ENCODE measurements at regions of chr14 and their contacts with region 1.

Region 1: GRCh38 chr14:103899316-103899715 is 28.9 kb upstream of the TDRD9 start:
- DNase-seq: no peak
- H3K4me3 ChIP-seq: no peak overlapping the region
- CTCF ChIP-seq: no peak

Region 2: DNA sequence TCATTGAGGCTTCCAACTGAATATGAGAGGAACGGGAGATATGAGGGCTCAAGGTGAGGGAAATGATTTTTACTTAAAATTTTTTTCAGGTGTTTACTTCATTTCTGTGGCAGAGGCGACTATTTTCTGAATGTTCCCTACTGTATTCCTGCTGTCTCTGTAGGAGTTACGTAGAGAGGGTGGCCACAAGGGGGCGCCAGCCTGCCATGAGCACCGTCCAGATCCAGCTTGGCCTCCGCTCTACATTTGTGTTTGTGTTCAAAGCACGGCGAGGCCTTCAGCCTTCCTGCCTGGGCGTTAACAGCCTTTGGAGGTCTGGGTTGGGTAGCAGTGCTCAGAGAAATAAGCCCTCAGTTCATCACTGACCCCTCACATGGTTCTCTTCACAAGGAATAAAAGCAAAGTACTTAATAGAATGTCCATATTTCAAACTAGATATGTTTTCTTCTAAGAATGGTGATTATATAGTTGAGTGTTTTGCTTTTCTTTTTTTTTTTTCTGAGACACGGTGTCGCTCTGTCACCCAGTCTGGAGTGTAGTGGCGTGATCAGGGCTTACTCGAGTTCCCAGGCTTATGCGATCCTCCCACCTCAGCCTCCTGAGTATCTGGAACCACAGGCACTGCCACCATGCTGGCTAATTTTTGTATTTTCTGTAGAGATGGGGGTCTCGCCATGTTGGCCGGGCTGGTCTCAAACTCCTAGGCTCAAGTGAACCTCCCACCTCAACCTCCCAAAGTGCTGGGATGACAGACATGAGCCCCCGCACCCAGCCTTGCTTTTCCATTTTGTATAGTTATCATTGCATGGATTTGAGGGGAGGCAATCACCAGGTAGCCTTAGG is 398.9 kb before region 1 on chr14:
- CTCF ChIA-PET with region 1: no interaction called
- POLR2A ChIA-PET with region 1: no interaction called
- DNase-seq: peak; percentile 28
- H3K4me3 ChIP-seq: no peak overlapping the region
- CTCF ChIP-seq: peak; percentile 91

Region 3: GRCh38 chr14:103880348-103881267 is 18.7 kb before region 1 on chr14:
- CTCF ChIA-PET with region 1: interaction called, 12 read pairs
- POLR2A ChIA-PET with region 1: no interaction called
- DNase-seq: no peak
- H3K4me3 ChIP-seq: no peak overlapping the region
- CTCF ChIP-seq: no peak

Region 4: GRCh38 chr14:103910262-103910935 is 11.1 kb after region 1 on chr14:
- CTCF ChIA-PET with region 1: interaction called, 23 read pairs
- POLR2A ChIA-PET with region 1: no interaction called
- DNase-seq: peak; percentile 3
- H3K4me3 ChIP-seq: no peak overlapping the region; the same call in 1 of the 2 replicates
- CTCF ChIP-seq: peak; percentile 71

Measured in AG04449 (cell line).